MCF 10A (cell line): ENCODE measurements at regions of chrX and their contacts with region 1.

Region 1: GRCh38 chrX:17082831-17083230 is 136.4 kb downstream of the REPS2 start:
- DNase-seq: peak; percentile 47
- H3K4me3 Mint-ChIP-seq: no peak overlapping the region
- H3K27ac Mint-ChIP-seq: no peak overlapping the region
- H3K4me1 Mint-ChIP-seq: no peaks in the 10 kb centered on the region
- H3K27me3 Mint-ChIP-seq: peaks cover 87% of the 10 kb centered on the region
- CTCF ChIP-seq: no peak

Region 2: GRCh38 chrX:17062065-17062464 is 20.8 kb before region 1 on chrX:
- CTCF ChIA-PET with region 1: interaction called, 11 read pairs
- POLR2A ChIA-PET with region 1: interaction called, 3 read pairs
- intact Hi-C with region 1: no loop called
- DNase-seq: no peak
- H3K4me3 Mint-ChIP-seq: no peak overlapping the region
- H3K27ac Mint-ChIP-seq: no peak overlapping the region
- H3K4me1 Mint-ChIP-seq: no peaks in the 10 kb centered on the region
- H3K27me3 Mint-ChIP-seq: peaks cover 44% of the 10 kb centered on the region
- CTCF ChIP-seq: no peak